Heart left ventricle (tissue), 16 donors: ENCODE measurements at regions of chr5 and their contacts with region 1.

Region 1: GRCh38 chr5:178732281-178732680 is 1.8 kb upstream of the ZNF354A start:
- DNase-seq: no peak
- ATAC-seq: no peak
- H3K4me3 ChIP-seq: no peak overlapping the region
- H3K27ac ChIP-seq: no peak overlapping the region
- H3K4me1 ChIP-seq: peaks cover 0 to 15% (median 3%) of the 10 kb centered on the region in 12 donors
- H3K27me3 ChIP-seq: no peaks in the 10 kb centered on the region
- CTCF ChIP-seq: no peak
- POLR2A ChIP-seq: no peak

Region 2: DNA sequence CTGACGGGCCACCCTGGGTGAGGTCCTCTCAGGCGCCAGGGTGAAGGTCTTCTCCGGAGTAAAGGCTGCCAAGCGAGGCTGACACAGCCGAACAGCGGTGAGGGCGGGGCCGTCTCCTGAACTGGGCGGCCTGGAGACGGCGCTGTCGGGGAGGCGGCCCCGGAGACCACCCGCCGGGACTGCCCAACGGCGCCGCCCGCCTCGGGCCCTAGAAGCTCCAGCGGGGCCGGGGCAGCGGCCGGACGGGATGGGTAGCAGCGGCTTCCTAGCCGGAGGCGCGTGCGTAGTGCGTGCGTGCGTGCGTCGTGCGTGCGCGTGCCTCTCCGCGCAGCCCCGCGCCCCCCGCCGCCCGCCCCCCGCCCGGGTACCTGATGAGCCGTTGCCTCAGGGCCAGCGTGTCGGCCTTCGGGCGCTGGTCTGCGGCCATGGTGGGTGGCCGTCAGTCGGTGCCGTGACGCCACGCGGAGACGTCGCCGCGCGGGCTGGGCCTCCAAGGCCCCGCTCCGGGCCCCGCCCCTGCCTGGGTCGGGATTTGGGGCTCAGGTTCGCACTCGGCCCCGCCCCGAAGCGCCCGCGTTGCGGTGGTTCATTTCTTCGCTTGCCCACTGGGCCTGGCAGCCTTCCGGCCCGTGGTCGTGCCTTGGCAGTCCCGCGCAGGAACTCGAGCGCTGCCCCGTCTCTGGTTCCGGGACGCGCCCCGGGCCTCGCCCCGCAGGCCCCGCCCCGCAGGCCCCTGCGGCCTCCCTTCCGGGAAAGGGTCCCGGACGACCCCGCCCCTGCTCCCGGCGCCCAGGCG is 500.0 kb before region 1 on chr5 and contains the start of gene PHYKPL:
- intact Hi-C with region 1: loop called in 1 of 10 experiments (anchors 10 kb)
- DNase-seq: peak; percentile 69 to 89 (median 81)
- ATAC-seq: peak; percentile 29 to 81 (median 70)
- H3K4me3 ChIP-seq: peak within 1 kb of the TSS; percentile 59 to 97 (median 73)
- H3K27ac ChIP-seq: peak within 1 kb of the TSS; percentile 82 to 99 (median 98)
- H3K4me1 ChIP-seq: peaks cover 5 to 67% (median 39%) of the 10 kb centered on the region in 12 donors
- H3K27me3 ChIP-seq: no peaks in the 10 kb centered on the region
- CTCF ChIP-seq: peak in 2 of 12 donors; percentile 15 to 17
- POLR2A ChIP-seq: peak in 1 of 2 donors; percentile 54
- total RNA-seq, gene PHYKPL: 33.3 to 56.2 (median 38.6) TPM

Region 3: GRCh38 chr5:178683783-178684182 is 48.5 kb before region 1 on chr5:
- intact Hi-C with region 1: no loop called
- DNase-seq: no peak
- ATAC-seq: no peak
- H3K4me3 ChIP-seq: no peak overlapping the region
- H3K27ac ChIP-seq: no peak overlapping the region
- H3K4me1 ChIP-seq: no peaks in the 10 kb centered on the region
- H3K27me3 ChIP-seq: peaks cover 0 to 6% (median 0%) of the 10 kb centered on the region in 9 donors
- CTCF ChIP-seq: no peak
- POLR2A ChIP-seq: no peak

Region 4: GRCh38 chr5:178818094-178818493 is 85.8 kb after region 1 on chr5:
- intact Hi-C with region 1: no loop called
- DNase-seq: no peak
- ATAC-seq: no peak
- H3K4me3 ChIP-seq: no peak overlapping the region
- H3K27ac ChIP-seq: no peak overlapping the region
- H3K4me1 ChIP-seq: no peaks in the 10 kb centered on the region
- H3K27me3 ChIP-seq: peaks cover 0 to 6% (median 0%) of the 10 kb centered on the region in 9 donors
- CTCF ChIP-seq: no peak
- POLR2A ChIP-seq: no peak

Region 5: GRCh38 chr5:178838695-178839685 is 106.7 kb after region 1 on chr5:
- intact Hi-C with region 1: loop called in 2 of 10 experiments (anchors 5 to 10 kb)
- DNase-seq: peak in 4 of 5 donors; percentile 47 to 70 (median 56)
- ATAC-seq: peak; percentile 83 to 95 (median 88)
- H3K4me3 ChIP-seq: no peak overlapping the region
- H3K27ac ChIP-seq: no peak overlapping the region
- H3K4me1 ChIP-seq: no peaks in the 10 kb centered on the region
- H3K27me3 ChIP-seq: peaks cover 0 to 4% (median 0%) of the 10 kb centered on the region in 9 donors
- CTCF ChIP-seq: peak in 11 of 12 donors; percentile 26 to 76 (median 56)
- POLR2A ChIP-seq: no peak

Region 6: DNA sequence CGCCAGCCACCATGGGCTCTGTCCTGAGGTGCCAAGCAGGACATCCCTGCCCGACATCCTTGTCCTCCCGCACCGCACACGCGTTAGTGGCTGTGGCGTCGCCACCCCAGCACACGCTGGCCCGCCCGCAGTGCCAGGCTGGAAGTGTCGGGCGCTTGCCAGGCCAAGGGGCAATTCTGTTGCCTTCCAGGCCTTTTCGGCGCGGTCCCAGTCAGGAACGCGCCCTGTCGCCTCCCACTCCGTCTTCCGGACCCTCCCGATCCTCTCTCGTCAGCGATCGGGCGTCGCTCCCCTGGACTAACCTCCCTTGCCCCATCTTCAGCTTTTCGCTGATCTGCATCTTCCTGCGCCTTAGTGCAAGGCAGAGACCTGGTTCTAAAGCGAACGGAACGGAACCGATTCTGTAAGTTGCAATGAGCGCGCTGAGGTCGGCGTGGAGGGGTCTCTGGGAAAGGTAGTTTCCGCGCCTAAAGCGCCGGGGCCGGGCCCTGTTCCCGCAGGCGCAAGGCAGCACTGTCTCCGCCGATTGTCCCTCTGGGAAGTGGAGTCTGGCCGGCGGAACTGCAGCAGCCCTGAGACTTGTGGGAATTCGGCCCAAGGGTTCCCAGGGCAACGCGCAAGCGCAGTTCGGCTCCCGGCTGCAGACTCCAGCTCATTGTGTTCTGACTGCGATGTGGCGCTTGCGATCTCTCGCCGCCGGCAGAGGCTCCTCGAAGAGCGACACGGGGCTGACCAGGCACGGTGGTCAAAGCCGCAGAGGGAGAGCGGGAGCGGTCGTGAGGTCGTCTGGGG is 208.5 kb after region 1 on chr5 and contains the start of gene ZNF454:
- intact Hi-C with region 1: loop called in 1 of 10 experiments (anchors 5 kb)
- DNase-seq: peak; percentile 95 to 97 (median 96)
- ATAC-seq: peak; percentile 99 to 100 (median 100)
- H3K4me3 ChIP-seq: peak within 1 kb of the TSS; percentile 54 to 97 (median 71)
- H3K27ac ChIP-seq: peak within 1 kb of the TSS; percentile 2 to 88 (median 71)
- H3K4me1 ChIP-seq: peaks cover 0 to 16% (median 6%) of the 10 kb centered on the region in 12 donors
- H3K27me3 ChIP-seq: no peaks in the 10 kb centered on the region
- CTCF ChIP-seq: peak in 1 of 12 donors; percentile 10
- POLR2A ChIP-seq: peak in 1 of 2 donors; percentile 54
- total RNA-seq, gene ZNF454: 1.3 to 3.4 (median 1.8) TPM

Region 7: GRCh38 chr5:179060116-179061008 is 328.1 kb after region 1 on chr5 and contains the start of gene ZNF354C:
- intact Hi-C with region 1: loop called in 8 of 10 experiments (anchors 1 to 5 kb)
- DNase-seq: peak; percentile 92 to 96 (median 94)
- ATAC-seq: peak; percentile 99
- H3K4me3 ChIP-seq: peak within 1 kb of the TSS; percentile 51 to 95 (median 78)
- H3K27ac ChIP-seq: peak within 1 kb of the TSS in 11 of 12 donors; percentile 45 to 86 (median 82)
- H3K4me1 ChIP-seq: peaks cover 0 to 19% (median 9%) of the 10 kb centered on the region in 12 donors
- H3K27me3 ChIP-seq: no peaks in the 10 kb centered on the region
- CTCF ChIP-seq: peak in 1 of 12 donors; percentile 18
- POLR2A ChIP-seq: peak in 1 of 2 donors; percentile 87
- total RNA-seq, gene ZNF354C: 3.5 to 5.7 (median 4.1) TPM